Natural killer cell (primary cell): ENCODE measurements at regions of chr3 and their contacts with region 1.

Region 1: DNA sequence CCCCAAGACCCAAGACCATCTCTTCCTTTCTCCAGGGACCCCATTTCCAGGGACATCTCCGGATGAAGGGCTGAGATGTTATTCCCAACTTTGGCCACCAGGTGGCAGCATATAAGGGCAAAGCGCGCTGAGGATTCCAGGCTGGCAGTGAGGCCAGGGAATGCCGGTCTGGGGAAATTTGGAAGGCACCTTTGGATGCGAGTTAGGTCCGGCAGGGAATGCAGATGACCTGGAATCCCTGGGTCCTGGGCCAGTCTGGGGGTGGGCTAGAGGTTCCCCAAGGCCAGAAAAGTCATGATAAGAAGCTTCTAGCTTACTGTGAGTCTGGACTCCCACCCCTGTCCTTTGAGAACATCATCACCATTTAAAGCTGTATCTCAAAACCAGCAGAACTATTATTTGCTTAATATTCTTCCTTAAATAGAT is 1.6 kb upstream of the CHST13 start:
- DNase-seq: peak; percentile 45 to 65
- ATAC-seq: peak in 2 of 3 donors; percentile 42 to 54
- H3K4me3 ChIP-seq: no peak overlapping the region
- H3K4me3 Mint-ChIP-seq: no peak overlapping the region
- H3K27ac ChIP-seq: no peak overlapping the region
- H3K27ac Mint-ChIP-seq: no peak overlapping the region
- H3K4me1 ChIP-seq: peaks cover 12% of the 10 kb centered on the region
- H3K4me1 Mint-ChIP-seq: no peaks in the 10 kb centered on the region
- H3K27me3 ChIP-seq: peaks cover 3% of the 10 kb centered on the region
- H3K27me3 Mint-ChIP-seq: peaks cover 0 to 13% of the 10 kb centered on the region in 2 donors
- CTCF ChIP-seq: peak; percentile 87

Region 2: DNA sequence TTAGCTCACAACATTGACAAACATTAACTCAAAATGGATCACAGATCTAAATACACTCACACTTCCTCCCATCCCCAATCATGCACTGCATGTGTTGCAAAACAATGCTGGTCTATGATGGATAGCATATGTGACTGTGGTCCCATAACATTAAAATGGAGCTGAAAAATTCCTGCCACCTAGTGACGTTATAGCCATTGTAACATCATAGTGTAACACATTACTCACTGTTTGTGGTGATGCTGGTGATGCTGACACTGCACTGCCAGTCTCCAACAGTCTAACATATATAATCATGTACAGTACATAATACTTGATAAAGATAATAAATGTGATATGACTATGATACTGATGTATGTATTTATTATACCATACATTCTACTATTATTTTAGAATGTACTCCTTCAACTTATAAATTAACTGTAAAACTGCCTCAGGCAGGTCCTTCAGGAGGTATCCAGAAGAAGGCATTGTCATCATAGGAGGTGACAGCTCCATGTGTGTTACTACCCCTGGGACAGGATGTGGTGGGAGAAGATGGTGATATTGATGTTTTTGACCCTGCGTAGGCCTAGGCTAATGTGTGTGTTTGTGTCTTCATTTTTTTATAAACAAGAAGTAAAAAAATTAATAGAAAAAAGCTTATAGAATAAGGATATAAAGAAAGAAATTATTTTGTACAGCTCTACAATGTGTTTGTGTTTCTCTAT is 91.3 kb after region 1 on chr3:
- intact Hi-C with region 1: loop called (anchors 5 kb)
- DNase-seq: peak in 1 of 2 donors; percentile 36
- ATAC-seq: peak; percentile 83 to 87 (median 83)
- H3K4me3 ChIP-seq: no peak overlapping the region
- H3K4me3 Mint-ChIP-seq: peak overlapping the region; percentile 55
- H3K27ac ChIP-seq: no peak overlapping the region
- H3K27ac Mint-ChIP-seq: peak overlapping the region; percentile 61 to 69
- H3K4me1 ChIP-seq: peaks cover 18% of the 10 kb centered on the region
- H3K4me1 Mint-ChIP-seq: peaks cover 39% of the 10 kb centered on the region in 2 donors
- H3K27me3 ChIP-seq: no peaks in the 10 kb centered on the region
- H3K27me3 Mint-ChIP-seq: no peaks in the 10 kb centered on the region
- CTCF ChIP-seq: no peak

Region 3: DNA sequence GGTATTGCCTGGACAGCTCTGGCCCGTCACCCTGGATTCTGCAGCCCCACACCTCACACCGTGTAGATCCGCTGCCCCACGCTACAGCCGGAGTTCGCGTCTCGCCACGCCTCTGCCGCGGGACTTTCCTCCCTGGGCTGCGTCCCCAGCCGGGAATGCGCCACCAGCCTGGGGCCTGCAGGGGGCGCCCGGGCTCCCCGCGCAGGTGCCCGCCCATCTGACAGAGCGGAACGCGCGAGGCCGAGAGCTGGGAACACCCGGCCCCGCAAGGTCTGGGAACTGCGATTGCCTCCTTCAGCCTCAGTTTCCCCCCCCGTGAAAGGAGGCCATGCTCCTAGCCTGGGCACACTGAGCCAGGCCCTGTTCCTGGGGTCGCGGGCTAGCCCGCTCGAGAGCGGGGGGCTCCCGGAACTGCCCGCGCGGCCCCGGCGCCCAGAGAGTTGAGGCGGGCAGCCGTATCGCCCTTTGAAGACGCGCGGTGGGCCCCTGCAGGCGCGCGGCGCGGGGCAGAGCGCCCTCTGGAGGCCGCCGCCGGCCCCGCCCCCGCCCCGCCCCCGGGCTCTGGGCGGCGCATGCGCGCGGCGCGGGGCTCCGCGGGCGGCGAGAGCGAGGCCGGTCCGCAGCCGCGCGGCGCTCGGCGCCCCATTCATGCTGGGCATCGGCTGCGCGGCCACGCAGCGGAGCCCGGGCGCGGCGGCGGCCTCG is 460.2 kb after region 1 on chr3 and contains the start of gene PLXNA1:
- intact Hi-C with region 1: loop called (anchors 5 kb)
- DNase-seq: peak; percentile 91 to 95
- ATAC-seq: peak; percentile 84 to 93 (median 84)
- H3K4me3 ChIP-seq: peak within 1 kb of the TSS; percentile 49
- H3K4me3 Mint-ChIP-seq: peak within 1 kb of the TSS; percentile 83
- H3K27ac ChIP-seq: peak within 1 kb of the TSS; percentile 98
- H3K27ac Mint-ChIP-seq: peak within 1 kb of the TSS; percentile 83 to 91
- H3K4me1 ChIP-seq: peaks cover 22% of the 10 kb centered on the region
- H3K4me1 Mint-ChIP-seq: peaks cover 0 to 13% of the 10 kb centered on the region in 2 donors
- H3K27me3 ChIP-seq: peaks cover 3% of the 10 kb centered on the region
- H3K27me3 Mint-ChIP-seq: peaks cover 23 to 28% of the 10 kb centered on the region in 2 donors
- CTCF ChIP-seq: peak; percentile 93
- total RNA-seq, gene PLXNA1: 2.5 to 4.3 (median 2.8) TPM

Region 4: GRCh38 chr3:127455541-127456450 is 933.4 kb after region 1 on chr3:
- intact Hi-C with region 1: loop called (anchors 10 kb)
- DNase-seq: peak in 1 of 2 donors; percentile 50
- ATAC-seq: peak; percentile 36 to 84 (median 45)
- H3K4me3 ChIP-seq: no peak overlapping the region
- H3K4me3 Mint-ChIP-seq: no peak overlapping the region
- H3K27ac ChIP-seq: no peak overlapping the region
- H3K27ac Mint-ChIP-seq: no peak overlapping the region
- H3K4me1 ChIP-seq: peaks cover 3% of the 10 kb centered on the region
- H3K4me1 Mint-ChIP-seq: peaks cover 0 to 7% of the 10 kb centered on the region in 2 donors
- H3K27me3 ChIP-seq: peaks cover 11% of the 10 kb centered on the region
- H3K27me3 Mint-ChIP-seq: peaks cover 59 to 71% of the 10 kb centered on the region in 2 donors
- CTCF ChIP-seq: peak; percentile 53

Region 5: GRCh38 chr3:127544192-127544802 is 1021.9 kb after region 1 on chr3:
- intact Hi-C with region 1: loop called (anchors 5 kb)
- DNase-seq: peak; percentile 48 to 80
- ATAC-seq: peak; percentile 41 to 60 (median 50)
- H3K4me3 ChIP-seq: no peak overlapping the region
- H3K4me3 Mint-ChIP-seq: no peak overlapping the region
- H3K27ac ChIP-seq: no peak overlapping the region
- H3K27ac Mint-ChIP-seq: no peak overlapping the region
- H3K4me1 ChIP-seq: peaks cover 15% of the 10 kb centered on the region
- H3K4me1 Mint-ChIP-seq: peaks cover 6 to 15% of the 10 kb centered on the region in 2 donors
- H3K27me3 ChIP-seq: no peaks in the 10 kb centered on the region
- H3K27me3 Mint-ChIP-seq: peaks cover 0 to 2% of the 10 kb centered on the region in 2 donors
- CTCF ChIP-seq: peak; percentile 75